ENCODE measurements at regions of chrX and their contacts with region 1.

Region 1: DNA sequence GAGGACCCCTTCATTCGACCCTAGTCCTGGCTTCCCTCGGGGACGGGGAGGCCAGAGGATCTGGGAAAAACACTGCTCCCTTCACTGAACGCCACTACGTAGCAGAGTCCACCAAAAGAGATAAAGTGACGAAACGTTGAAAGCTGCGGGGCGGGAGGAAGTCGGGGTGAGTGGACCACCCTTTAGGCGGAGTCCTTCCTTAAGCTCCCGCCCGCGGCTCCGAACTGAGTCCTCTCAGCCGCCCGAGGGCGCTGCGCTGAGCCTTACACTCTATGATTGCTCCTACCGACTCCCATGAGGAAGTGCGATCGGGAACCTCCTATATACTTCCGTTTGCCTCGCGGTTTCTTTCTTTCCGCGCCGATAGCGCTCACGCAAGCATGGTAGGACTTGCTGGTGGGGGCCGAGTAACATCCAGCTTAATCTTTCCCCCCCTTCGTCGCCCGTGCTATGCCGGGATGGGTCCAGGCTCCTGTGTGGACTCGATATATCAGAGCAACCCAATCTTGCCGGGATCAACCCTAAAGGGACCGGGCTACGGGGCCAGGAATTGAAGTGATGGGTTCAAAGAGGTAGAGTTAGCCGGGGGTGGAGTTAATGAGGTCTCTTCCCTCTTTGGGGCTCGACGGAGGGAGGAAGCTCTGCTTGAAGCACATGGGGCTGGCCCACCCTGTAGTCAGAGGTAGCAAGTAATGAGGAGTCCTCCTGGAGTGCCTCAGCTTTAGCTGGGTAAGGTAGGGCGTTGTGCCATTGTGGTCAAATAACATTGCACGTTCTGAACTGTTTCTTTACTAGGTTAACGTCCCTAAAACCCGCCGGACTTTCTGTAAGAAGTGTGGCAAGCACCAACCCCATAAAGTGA is at the start of gene RPL36A:
- DNase-seq: peak; percentile 76
- ATAC-seq: peak; percentile 98
- H3K4me3 Mint-ChIP-seq: peak within 1 kb of the TSS; percentile 95
- H3K27ac Mint-ChIP-seq: peak within 1 kb of the TSS; percentile 76
- H3K4me1 Mint-ChIP-seq: peaks cover 34% of the 10 kb centered on the region
- H3K27me3 Mint-ChIP-seq: no peaks in the 10 kb centered on the region
- total RNA-seq, gene RPL36A: 271 to 325 TPM

Region 2: DNA sequence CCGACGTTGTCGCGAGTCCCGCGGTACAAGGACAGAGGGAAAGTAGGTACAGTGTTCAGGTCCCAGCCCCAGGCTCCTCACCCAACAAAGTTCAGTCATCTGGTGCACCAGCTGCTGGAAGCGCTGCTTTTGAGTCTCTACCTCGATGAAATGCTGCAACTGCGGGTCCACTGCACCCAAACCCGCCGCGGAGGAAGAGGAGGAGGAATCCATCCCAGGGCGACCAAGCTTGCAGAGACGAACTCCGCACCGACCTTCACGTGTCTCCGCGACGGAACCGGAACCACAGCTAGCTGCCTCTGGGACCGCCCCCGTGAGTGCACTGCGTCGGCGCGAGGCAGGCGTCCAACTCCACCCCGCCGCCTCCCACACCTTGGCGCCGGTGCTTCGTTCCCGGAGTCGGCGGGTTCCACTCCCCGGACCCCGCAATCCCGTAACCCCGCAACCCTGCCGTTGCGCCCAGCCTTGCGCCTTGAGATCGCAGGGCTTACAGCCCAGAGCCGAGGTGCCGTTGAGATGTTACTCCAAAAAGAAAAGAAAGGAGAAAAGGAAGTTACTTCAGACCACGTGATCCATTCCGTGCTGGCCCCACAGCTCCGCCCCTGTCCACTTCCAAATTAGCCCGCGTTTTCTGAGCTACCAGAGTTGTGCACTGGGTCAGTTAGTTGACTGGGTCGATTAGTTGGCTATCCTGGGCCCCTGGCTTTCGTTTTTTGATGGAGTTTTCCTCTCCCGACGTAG is 42.3 kb before region 1 on chrX and contains the start of gene TIMM8A:
- POLR2A ChIA-PET with region 1: interaction called, 16 read pairs
- DNase-seq: peak; percentile 77
- ATAC-seq: peak; percentile 98
- H3K4me3 Mint-ChIP-seq: peak within 1 kb of the TSS; percentile 88
- H3K27ac Mint-ChIP-seq: peak within 1 kb of the TSS; percentile 87
- H3K4me1 Mint-ChIP-seq: peaks cover 4% of the 10 kb centered on the region
- H3K27me3 Mint-ChIP-seq: peaks cover 3% of the 10 kb centered on the region
- total RNA-seq, gene TIMM8A: 13.5 to 14.5 TPM

Region 3: DNA sequence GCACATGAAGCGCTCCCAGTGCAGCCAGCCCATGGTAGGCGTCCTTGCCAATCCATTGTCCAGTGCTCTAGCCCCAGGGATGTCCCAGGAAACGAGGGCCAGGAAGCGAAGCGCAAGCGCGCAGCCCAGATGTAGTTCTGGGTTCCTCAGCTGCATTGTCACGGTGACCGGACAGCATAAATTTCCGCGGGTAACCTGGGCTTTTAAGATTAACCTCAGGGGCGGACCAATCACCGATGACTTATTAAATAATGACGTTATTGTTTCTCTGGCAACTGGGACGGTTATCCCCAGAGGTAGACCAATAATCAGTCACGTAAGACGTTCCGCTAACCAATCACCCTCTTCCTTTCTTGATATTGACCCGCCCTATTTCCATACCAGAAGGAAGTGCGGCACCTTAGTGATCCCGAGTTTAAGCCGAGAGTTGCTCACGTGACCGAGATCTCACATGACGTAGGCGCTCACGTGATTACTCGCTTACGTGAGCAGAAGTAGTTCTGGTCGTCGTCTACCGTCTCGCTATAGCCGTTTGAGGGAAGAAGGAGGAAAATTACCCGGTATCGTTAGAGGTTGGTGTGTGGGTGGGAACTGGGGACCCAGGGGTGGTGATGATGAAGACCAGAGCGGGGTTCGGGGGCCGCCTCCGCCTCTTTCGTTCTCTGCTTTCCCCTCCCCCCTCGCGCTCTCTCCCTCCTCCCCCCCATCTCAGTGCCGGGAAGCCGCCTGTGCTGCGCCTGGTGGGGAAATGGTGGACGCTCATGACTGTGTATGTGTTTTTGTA is 17.0 kb after region 1 on chrX and contains the starts of genes GLA and HNRNPH2:
- POLR2A ChIA-PET with region 1: interaction called, 11 read pairs
- DNase-seq: peak; percentile 81
- ATAC-seq: peak; percentile 91
- H3K4me3 Mint-ChIP-seq: peak within 1 kb of the TSS; percentile 98
- H3K27ac Mint-ChIP-seq: peak within 1 kb of the TSS; percentile 98
- H3K4me1 Mint-ChIP-seq: peaks cover 19% of the 10 kb centered on the region
- H3K27me3 Mint-ChIP-seq: no peaks in the 10 kb centered on the region
- total RNA-seq, gene GLA: 27.7 to 32.5 TPM
- total RNA-seq, gene HNRNPH2: 36.9 to 41.1 TPM

Region 4: GRCh38 chrX:101415180-101416145 is 24.6 kb after region 1 on chrX:
- POLR2A ChIA-PET with region 1: interaction called, 13 read pairs
- DNase-seq: no peak
- ATAC-seq: peak; percentile 52
- H3K4me3 Mint-ChIP-seq: no peak overlapping the region
- H3K27ac Mint-ChIP-seq: no peak overlapping the region
- H3K4me1 Mint-ChIP-seq: peaks cover 29% of the 10 kb centered on the region
- H3K27me3 Mint-ChIP-seq: no peaks in the 10 kb centered on the region

Measured in activated naive CD8-positive, alpha-beta T cell treated with anti-CD3 and anti-CD28 coated beads, Interleukin-2, amount 10 ng/mL, durations not matched to agents 7 days and 5 days (primary cell).